PC-9 (cell line): ENCODE measurements at regions of chr9 and their contacts with region 1.

Region 1: DNA sequence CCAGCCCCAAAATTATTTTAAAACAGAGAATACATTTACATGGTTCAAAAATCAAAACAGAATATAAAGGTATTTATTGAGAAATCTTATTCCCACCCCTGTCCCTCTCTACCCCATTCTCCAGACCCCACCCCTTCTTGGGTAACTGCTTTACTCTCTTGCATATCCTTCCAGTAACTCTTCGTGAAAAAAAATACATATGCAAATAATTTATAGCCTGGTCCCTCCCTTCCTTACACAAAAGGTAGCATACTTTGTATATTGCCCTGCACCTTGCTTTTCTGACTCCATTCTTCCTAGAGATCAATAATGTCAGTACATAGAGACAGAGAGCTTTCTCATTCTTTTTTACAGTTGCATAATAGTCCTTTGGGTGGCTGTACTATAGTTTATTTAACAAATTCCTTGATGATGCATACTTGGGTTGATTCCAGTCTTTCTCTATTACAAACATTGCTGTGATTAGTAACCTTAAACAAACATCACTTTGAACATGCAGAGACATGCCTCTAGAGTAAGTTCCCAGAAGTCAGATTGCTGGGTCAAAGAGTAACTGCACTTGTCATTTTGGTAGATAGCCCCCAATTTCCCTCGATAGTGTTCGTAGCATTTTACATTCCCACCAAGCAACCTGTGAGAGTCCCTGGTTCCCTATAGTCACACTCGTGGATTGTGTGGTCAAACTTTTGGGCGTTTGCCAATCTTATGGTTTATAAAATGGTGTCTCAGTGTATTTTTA is 47.8 kb downstream of the STOM start:
- DNase-seq: peak in 1 of 2 experiments; percentile 95
- H3K4me3 ChIP-seq: no peak overlapping the region
- H3K27ac ChIP-seq: peak overlapping the region; percentile 30
- H3K4me1 ChIP-seq: peaks cover 15% of the 10 kb centered on the region
- H3K27me3 ChIP-seq: no peaks in the 10 kb centered on the region
- CTCF ChIP-seq: no peak

Region 2: GRCh38 chr9:121038804-121039203 is 283.4 kb before region 1 on chr9:
- CTCF ChIA-PET with region 1: no interaction called
- POLR2A ChIA-PET with region 1: no interaction called
- intact Hi-C with region 1: no loop called
- DNase-seq: no peak
- H3K4me3 ChIP-seq: no peak overlapping the region
- H3K27ac ChIP-seq: no peak overlapping the region
- H3K4me1 ChIP-seq: no peaks in the 10 kb centered on the region
- H3K27me3 ChIP-seq: no peaks in the 10 kb centered on the region
- CTCF ChIP-seq: no peak

Region 3: DNA sequence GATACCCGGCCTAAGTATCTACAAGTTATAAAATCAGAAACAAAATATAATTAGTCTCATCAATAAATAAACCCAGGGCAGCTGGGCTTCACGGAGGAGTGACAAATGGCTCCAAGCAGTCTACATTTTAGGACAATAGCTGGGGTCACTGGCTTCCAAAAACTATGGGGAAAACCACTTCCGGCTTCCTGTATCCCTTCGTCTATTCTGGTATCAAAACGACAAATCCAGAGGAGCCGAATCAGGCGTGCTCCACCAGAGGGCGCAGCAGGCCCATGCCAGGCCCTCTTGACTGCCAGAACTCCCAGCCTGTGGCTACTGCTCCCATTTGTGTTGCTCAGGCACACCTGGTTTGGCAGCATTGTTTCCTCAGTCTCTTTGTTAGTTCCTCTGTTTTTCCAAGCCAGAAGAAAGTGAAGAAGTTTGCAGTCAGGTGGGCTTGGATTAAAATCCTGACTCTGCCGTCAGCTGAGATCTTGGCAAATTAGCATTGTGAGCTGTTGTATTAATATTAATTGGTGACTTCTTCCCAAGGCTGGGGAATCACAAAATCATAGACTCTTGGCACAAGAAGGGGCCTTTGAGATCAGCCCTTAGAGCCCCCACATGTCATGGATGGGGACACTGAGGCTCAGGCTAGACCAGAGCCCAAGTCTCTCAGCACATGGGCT is 108.9 kb before region 1 on chr9:
- CTCF ChIA-PET with region 1: interaction called, 10 read pairs
- POLR2A ChIA-PET with region 1: no interaction called
- intact Hi-C with region 1: loop called (anchors 1 kb)
- DNase-seq: peak; percentile 78 to 94
- H3K4me3 ChIP-seq: no peak overlapping the region
- H3K27ac ChIP-seq: no peak overlapping the region
- H3K4me1 ChIP-seq: peaks cover 5% of the 10 kb centered on the region; the same call in 1 of the 2 replicates
- H3K27me3 ChIP-seq: no peaks in the 10 kb centered on the region
- CTCF ChIP-seq: peak; percentile 95

Region 4: GRCh38 chr9:121278535-121279261 is 43.5 kb before region 1 on chr9:
- CTCF ChIA-PET with region 1: interaction called, 17 read pairs
- POLR2A ChIA-PET with region 1: no interaction called
- intact Hi-C with region 1: loop called (anchors 2 kb)
- DNase-seq: peak; percentile 83 to 93
- H3K4me3 ChIP-seq: no peak overlapping the region; the same call in 1 of the 2 replicates
- H3K27ac ChIP-seq: peak overlapping the region; percentile 70
- H3K4me1 ChIP-seq: peaks cover 64% of the 10 kb centered on the region
- H3K27me3 ChIP-seq: no peaks in the 10 kb centered on the region
- CTCF ChIP-seq: peak; percentile 71

Region 5: DNA sequence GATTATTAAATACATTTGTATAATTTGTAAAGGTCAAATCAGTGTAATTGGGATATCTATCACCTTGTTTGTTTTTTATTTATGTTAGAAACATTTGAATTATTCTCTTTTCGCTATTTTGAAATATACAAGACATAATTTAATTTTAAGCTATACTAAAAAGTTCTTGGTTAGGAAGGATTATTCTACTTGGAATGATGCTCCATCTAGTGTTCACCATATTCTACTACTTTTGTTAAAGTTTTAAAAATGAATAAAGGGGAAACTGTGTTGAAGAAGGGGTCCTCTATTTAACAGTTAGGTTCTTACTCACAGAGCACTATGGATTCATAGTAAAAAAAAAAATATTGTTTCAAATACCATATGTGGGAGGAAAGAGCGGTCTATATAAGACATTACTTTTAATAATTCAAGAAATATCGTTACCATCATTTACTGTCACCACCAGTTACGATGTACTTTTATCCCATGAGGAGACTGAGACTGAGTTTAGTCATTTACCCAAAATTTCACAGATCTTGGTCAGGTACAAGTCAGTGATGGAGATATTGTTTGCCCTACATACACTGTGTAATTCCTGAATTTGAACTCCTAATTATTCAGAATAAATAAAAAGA is 54.1 kb after region 1 on chr9:
- CTCF ChIA-PET with region 1: interaction called, 7 read pairs
- POLR2A ChIA-PET with region 1: no interaction called
- intact Hi-C with region 1: loop called (anchors 1 kb)
- DNase-seq: no peak
- H3K4me3 ChIP-seq: no peak overlapping the region
- H3K27ac ChIP-seq: no peak overlapping the region
- H3K4me1 ChIP-seq: peaks cover 23% of the 10 kb centered on the region
- H3K27me3 ChIP-seq: no peaks in the 10 kb centered on the region
- CTCF ChIP-seq: peak; percentile 63

Region 6: DNA sequence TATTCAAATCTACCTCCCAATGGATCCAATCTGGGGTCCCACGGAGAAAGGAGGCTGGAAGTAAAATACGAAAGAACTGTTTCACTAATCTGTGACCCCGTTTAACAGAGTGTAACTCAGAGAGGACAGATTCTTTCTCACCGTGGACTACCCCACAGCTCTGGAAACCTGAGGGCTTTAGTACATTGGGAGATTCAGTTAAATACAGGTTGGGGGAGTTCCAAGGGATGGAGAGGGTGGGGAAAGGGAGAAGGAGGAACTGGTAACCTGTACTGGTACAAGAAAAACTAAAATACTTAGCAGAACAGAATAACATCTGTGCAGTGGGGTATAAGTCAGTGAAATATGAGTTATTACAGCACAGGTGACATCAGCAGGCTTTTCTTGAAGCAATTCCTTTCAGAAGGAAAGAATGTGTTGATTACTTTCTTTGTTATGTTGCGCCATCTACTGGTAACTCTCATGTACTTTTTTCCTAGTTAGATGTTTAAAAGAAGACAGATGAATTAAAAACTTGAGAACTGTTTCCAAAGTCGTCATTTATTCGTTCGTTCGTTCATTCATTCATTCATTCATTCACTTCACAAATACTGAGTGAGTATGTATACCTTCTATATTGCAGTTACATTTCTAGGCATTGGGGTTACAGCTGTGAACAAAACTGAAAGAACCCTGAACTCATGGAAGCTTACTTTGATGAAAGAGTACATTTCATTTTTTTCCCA is 77.8 kb after region 1 on chr9:
- CTCF ChIA-PET with region 1: interaction called, 10 read pairs
- POLR2A ChIA-PET with region 1: no interaction called
- intact Hi-C with region 1: loop called (anchors 1 kb)
- DNase-seq: peak in 1 of 2 experiments; percentile 68
- H3K4me3 ChIP-seq: no peak overlapping the region
- H3K27ac ChIP-seq: no peak overlapping the region
- H3K4me1 ChIP-seq: no peaks in the 10 kb centered on the region
- H3K27me3 ChIP-seq: no peaks in the 10 kb centered on the region
- CTCF ChIP-seq: peak; percentile 80

Region 7: GRCh38 chr9:121498150-121498486 is 175.9 kb after region 1 on chr9:
- CTCF ChIA-PET with region 1: no interaction called
- POLR2A ChIA-PET with region 1: no interaction called
- intact Hi-C with region 1: loop called (anchors 2 kb)
- DNase-seq: peak; percentile 65 to 66
- H3K4me3 ChIP-seq: 0 out of 2 replicates have a peak overlapping the region, but pooled peaks have one; percentile 58
- H3K27ac ChIP-seq: no peak overlapping the region
- H3K4me1 ChIP-seq: peaks cover 16% of the 10 kb centered on the region
- H3K27me3 ChIP-seq: peaks cover 43% of the 10 kb centered on the region
- CTCF ChIP-seq: peak; percentile 72

Region 8: DNA sequence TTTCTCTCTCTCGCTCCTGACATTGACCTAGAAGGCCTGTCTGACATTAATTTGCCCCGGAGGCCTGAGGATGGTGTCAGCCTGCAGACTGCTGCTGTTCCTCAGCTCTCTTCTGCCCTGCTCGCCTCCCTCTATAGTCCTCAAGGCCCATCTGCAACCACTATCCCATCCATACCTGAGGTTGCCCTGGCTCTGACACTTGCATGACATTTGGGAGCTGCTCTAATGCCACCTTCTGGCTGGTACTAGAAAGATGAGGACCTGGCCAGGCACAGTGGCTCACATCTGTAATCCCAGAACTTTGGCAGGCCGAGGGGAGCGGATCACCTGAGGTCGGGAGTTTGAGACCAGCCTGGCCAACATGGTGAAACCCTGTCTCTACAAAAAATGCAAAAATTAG is 216.0 kb after region 1 on chr9:
- CTCF ChIA-PET with region 1: no interaction called
- POLR2A ChIA-PET with region 1: no interaction called
- intact Hi-C with region 1: loop called (anchors 2 kb)
- DNase-seq: peak in 1 of 2 experiments; percentile 34
- H3K4me3 ChIP-seq: no peak overlapping the region
- H3K27ac ChIP-seq: no peak overlapping the region
- H3K4me1 ChIP-seq: no peaks in the 10 kb centered on the region
- H3K27me3 ChIP-seq: 0 out of 2 replicates have a peak, but pooled peaks cover 3% of the 10 kb centered on the region
- CTCF ChIP-seq: no peak; the same call in 1 of the 2 replicates